Transverse colon (tissue), 4 donors: ENCODE measurements at regions of chr1 and their contacts with region 1.

Region 1: DNA sequence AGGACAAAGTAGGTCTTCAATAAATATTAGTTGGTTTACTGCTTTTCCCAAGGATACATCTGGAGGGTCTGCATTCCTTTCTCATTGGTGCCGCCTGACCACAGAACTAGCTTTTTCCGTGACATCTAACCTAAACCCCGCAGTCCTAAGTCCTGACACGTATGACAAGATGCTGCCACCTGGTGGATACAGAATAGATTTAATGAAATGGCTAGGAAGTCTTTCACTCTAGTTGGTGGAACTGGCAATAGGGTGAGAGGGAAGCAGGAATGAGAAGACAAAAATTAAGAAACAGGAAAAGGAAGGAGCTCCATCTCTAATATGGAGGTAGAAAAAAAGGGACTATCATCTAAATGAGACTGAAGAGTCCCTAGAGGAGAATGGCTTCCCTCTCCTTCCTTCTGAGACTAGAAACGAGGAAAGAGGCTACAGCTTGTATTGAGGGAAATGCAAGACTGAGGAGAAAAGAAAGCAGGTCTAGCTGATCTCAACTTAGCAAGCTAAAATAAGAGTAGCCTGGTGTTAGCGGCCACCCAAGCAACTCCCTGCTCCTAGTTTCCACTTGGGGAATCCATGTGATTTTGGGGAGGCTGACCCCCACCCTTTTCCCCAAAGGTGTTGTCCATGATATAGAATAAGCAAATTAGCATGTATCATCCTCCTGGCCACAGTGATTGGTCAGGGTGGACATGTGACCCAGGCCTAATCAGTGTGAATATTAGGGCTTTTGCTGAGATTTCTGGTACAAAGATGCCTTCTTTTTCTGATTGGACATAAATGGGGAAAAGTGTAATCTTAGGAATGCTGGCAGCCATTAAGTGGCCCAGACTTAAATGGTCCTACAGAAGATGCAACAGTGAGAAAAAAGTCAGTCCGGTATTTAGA is 5.9 kb downstream of the RFX5 start:
- DNase-seq: peak; percentile 38
- H3K4me3 ChIP-seq: no peak overlapping the region
- H3K27ac ChIP-seq: peak overlapping the region; percentile 28 to 52 (median 45)
- H3K4me1 ChIP-seq: peaks cover 0 to 8% (median 6%) of the 10 kb centered on the region in 4 donors
- H3K27me3 ChIP-seq: no peaks in the 10 kb centered on the region
- CTCF ChIP-seq: peak; percentile 61 to 80 (median 65)
- EP300 ChIP-seq: no peak
- POLR2A ChIP-seq: no peak

Region 2: GRCh38 chr1:151294742-151295462 is 46.2 kb before region 1 on chr1:
- in situ Hi-C with region 1: loop called in 1 of 4 experiments (anchors 5 kb)
- intact Hi-C with region 1: loop called (anchors 5 kb)
- DNase-seq: no peak
- H3K4me3 ChIP-seq: no peak overlapping the region
- H3K27ac ChIP-seq: no peak overlapping the region
- H3K4me1 ChIP-seq: no peaks in the 10 kb centered on the region
- H3K27me3 ChIP-seq: no peaks in the 10 kb centered on the region
- CTCF ChIP-seq: no peak
- EP300 ChIP-seq: no peak
- POLR2A ChIP-seq: no peak

Region 3: GRCh38 chr1:151377150-151377884 is 36.2 kb after region 1 on chr1:
- in situ Hi-C with region 1: no loop called
- intact Hi-C with region 1: no loop called
- DNase-seq: peak; percentile 68
- H3K4me3 ChIP-seq: no peak overlapping the region
- H3K27ac ChIP-seq: peak overlapping the region; percentile 59 to 71 (median 65)
- H3K4me1 ChIP-seq: peaks cover 5 to 45% (median 23%) of the 10 kb centered on the region in 4 donors
- H3K27me3 ChIP-seq: no peaks in the 10 kb centered on the region
- CTCF ChIP-seq: no peak
- EP300 ChIP-seq: no peak
- POLR2A ChIP-seq: no peak